Testis (tissue), 5 donors: ENCODE measurements at regions of chr3 and their contacts with region 1.

Region 1: GRCh38 chr3:56988458-56989168 is 71.9 kb upstream of the SPATA12 start:
- DNase-seq: peak; percentile 90
- H3K4me3 ChIP-seq: no peak overlapping the region
- H3K27ac ChIP-seq: no peak overlapping the region
- H3K4me1 ChIP-seq: peaks cover 56% of the 10 kb centered on the region
- H3K27me3 ChIP-seq: no peaks in the 10 kb centered on the region
- CTCF ChIP-seq: peak; percentile 85 to 93 (median 91)
- POLR2A ChIP-seq: no peak

Region 2: DNA sequence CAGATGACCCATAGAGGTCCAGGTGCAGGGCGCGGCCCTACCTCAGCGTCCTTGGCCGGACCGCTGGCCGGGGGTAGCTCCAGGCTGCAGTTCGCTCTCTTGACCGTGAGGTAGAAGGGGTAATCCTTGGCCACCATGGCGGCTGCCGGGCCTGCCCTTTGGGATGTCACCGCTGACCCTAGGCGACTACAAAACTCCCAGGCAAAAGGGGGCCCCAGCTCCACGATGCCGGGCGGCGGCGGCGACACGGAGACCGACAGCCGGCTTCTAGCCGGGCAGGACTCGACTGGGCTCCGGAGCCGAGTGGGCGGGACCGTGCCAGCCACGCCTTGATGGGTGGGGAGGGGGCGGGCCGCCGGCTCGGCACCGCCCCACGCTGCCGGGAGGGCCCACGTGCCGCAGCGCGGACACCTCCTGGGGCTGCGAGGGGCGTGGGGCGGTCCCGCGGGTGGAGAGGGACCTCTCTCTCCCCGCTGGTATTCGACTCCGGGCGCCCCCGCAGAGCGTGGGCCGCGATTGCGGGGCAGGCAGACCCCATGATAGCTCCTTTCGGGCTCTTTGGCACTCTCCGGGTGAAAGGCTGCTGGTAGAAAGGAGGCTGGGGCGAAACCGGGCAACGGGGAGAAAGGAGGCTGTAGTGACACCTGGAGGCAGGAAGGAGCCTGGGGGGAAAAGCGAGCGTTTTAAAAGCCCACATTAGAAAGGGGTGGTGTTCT is 186.8 kb before region 1 on chr3 and contains the start of gene ARHGEF3:
- intact Hi-C with region 1: loop called (anchors 2 kb)
- DNase-seq: peak; percentile 89
- H3K4me3 ChIP-seq: peak within 1 kb of the TSS; percentile 55 to 74
- H3K27ac ChIP-seq: peak within 1 kb of the TSS; percentile 68 to 81
- H3K4me1 ChIP-seq: peaks cover 5% of the 10 kb centered on the region
- H3K27me3 ChIP-seq: no peaks in the 10 kb centered on the region
- CTCF ChIP-seq: peak in 2 of 3 experiments; percentile 9 to 13
- POLR2A ChIP-seq: peak; percentile 82
- total RNA-seq, gene ARHGEF3: 55.1 to 72.2 TPM